ENCODE measurements at regions of chr16 and their contacts with region 1.

Region 1: GRCh38 chr16:24504472-24505345 is 34.7 kb upstream of the RBBP6 start:
- DNase-seq: peak; percentile 64
- ATAC-seq: peak; percentile 95
- H3K4me3 Mint-ChIP-seq: no peak overlapping the region
- H3K27ac Mint-ChIP-seq: no peak overlapping the region
- H3K4me1 Mint-ChIP-seq: no peaks in the 10 kb centered on the region
- H3K27me3 Mint-ChIP-seq: peaks cover 11% of the 10 kb centered on the region
- CTCF ChIP-seq: peak; percentile 48

Region 2: DNA sequence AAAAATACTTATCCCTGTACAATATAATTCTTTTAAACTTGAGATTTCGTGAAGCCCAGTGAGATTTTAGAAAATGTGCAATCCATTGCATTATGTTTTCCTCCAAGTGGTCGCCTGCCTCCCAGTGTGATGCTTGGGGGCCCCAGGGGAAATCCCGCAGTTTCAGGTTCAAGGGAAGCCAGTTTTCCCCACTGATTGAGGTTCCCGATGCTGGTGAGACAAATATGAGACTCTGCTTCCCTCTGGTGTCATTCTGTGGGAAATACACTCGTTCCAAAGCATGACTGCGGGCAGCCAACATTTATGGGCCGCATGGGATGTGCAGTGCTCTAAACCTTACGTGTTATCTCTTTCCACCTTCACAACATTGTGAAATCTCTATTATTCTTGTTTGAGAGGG is 468.1 kb before region 1 on chr16:
- CTCF ChIA-PET with region 1: interaction called, 51 read pairs
- POLR2A ChIA-PET with region 1: no interaction called
- DNase-seq: peak; percentile 59
- ATAC-seq: peak; percentile 87
- H3K4me3 Mint-ChIP-seq: no peak overlapping the region
- H3K27ac Mint-ChIP-seq: no peak overlapping the region
- H3K4me1 Mint-ChIP-seq: peaks cover 2% of the 10 kb centered on the region; the same call in 1 of the 2 replicates
- H3K27me3 Mint-ChIP-seq: no peaks in the 10 kb centered on the region
- CTCF ChIP-seq: peak; percentile 67

Region 3: DNA sequence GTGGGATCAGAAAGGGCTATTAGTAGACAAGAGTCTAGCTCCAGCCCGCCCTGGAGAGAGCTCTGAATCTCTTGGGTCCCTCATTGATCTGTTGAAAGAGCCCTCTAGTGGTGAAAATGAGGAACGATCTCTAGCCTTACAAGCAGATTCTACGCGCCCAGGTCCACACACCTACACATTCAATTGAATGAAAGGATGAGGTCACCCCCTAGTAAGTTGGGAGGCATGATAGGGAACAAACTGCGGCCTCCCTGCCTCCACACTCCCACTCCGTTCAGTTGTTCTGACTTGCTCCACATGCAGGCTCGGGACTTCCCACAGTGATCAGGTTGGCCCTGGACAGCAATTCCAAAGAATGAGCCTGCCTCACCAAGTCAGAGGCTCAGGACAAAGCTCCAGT is 251.5 kb before region 1 on chr16:
- CTCF ChIA-PET with region 1: interaction called, 32 read pairs
- POLR2A ChIA-PET with region 1: no interaction called
- DNase-seq: peak; percentile 58
- ATAC-seq: peak; percentile 76
- H3K4me3 Mint-ChIP-seq: no peak overlapping the region
- H3K27ac Mint-ChIP-seq: no peak overlapping the region
- H3K4me1 Mint-ChIP-seq: peaks cover 28% of the 10 kb centered on the region
- H3K27me3 Mint-ChIP-seq: peaks cover 40% of the 10 kb centered on the region
- CTCF ChIP-seq: peak; percentile 79

Region 4: GRCh38 chr16:24318670-24319069 is 186.0 kb before region 1 on chr16:
- CTCF ChIA-PET with region 1: interaction called, 12 read pairs
- POLR2A ChIA-PET with region 1: no interaction called
- DNase-seq: peak; percentile 58
- ATAC-seq: peak; percentile 96
- H3K4me3 Mint-ChIP-seq: no peak overlapping the region
- H3K27ac Mint-ChIP-seq: no peak overlapping the region
- H3K4me1 Mint-ChIP-seq: peaks cover 26% of the 10 kb centered on the region
- H3K27me3 Mint-ChIP-seq: no peaks in the 10 kb centered on the region; the same call in 1 of the 2 replicates
- CTCF ChIP-seq: no peak

Region 5: GRCh38 chr16:24382762-24383407 is 121.8 kb before region 1 on chr16:
- CTCF ChIA-PET with region 1: interaction called, 10 read pairs
- POLR2A ChIA-PET with region 1: no interaction called
- DNase-seq: no peak
- ATAC-seq: peak; percentile 89
- H3K4me3 Mint-ChIP-seq: no peak overlapping the region
- H3K27ac Mint-ChIP-seq: no peak overlapping the region; the same call in 1 of the 2 replicates
- H3K4me1 Mint-ChIP-seq: peaks cover 36% of the 10 kb centered on the region
- H3K27me3 Mint-ChIP-seq: peaks cover 94% of the 10 kb centered on the region
- CTCF ChIP-seq: no peak

Region 6: GRCh38 chr16:24516900-24517669 is 12.4 kb after region 1 on chr16:
- CTCF ChIA-PET with region 1: interaction called, 17 read pairs
- POLR2A ChIA-PET with region 1: no interaction called
- DNase-seq: peak; percentile 85
- ATAC-seq: peak; percentile 76
- H3K4me3 Mint-ChIP-seq: no peak overlapping the region
- H3K27ac Mint-ChIP-seq: no peak overlapping the region
- H3K4me1 Mint-ChIP-seq: 0 out of 2 replicates have a peak, but pooled peaks cover 3% of the 10 kb centered on the region
- H3K27me3 Mint-ChIP-seq: no peaks in the 10 kb centered on the region
- CTCF ChIP-seq: peak; percentile 86

Region 7: DNA sequence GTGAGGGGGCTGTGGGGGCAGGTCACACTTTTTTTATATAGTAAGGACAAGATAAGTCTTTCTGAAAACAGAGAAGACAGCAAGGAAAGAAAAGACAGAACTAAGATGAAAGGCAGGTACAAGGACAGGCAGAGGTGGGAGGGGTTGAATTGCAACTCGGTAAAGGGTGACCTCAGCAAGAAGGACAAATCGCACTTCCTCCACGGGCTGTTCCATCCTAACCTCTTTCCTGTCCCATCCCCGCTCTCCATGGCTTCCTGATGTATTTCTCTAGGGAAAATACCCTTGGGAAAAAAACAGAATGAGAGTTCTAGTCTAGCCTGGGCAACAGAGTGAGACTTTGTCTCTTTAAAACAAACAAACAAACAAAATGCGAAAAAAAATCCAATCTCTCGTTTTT is 453.2 kb after region 1 on chr16:
- CTCF ChIA-PET with region 1: no interaction called
- POLR2A ChIA-PET with region 1: no interaction called
- DNase-seq: no peak
- ATAC-seq: no peak
- H3K4me3 Mint-ChIP-seq: no peak overlapping the region
- H3K27ac Mint-ChIP-seq: no peak overlapping the region
- H3K4me1 Mint-ChIP-seq: no peaks in the 10 kb centered on the region
- H3K27me3 Mint-ChIP-seq: no peaks in the 10 kb centered on the region
- CTCF ChIP-seq: no peak